ENCODE measurements at regions of chr5 and their contacts with region 1.

Region 1: DNA sequence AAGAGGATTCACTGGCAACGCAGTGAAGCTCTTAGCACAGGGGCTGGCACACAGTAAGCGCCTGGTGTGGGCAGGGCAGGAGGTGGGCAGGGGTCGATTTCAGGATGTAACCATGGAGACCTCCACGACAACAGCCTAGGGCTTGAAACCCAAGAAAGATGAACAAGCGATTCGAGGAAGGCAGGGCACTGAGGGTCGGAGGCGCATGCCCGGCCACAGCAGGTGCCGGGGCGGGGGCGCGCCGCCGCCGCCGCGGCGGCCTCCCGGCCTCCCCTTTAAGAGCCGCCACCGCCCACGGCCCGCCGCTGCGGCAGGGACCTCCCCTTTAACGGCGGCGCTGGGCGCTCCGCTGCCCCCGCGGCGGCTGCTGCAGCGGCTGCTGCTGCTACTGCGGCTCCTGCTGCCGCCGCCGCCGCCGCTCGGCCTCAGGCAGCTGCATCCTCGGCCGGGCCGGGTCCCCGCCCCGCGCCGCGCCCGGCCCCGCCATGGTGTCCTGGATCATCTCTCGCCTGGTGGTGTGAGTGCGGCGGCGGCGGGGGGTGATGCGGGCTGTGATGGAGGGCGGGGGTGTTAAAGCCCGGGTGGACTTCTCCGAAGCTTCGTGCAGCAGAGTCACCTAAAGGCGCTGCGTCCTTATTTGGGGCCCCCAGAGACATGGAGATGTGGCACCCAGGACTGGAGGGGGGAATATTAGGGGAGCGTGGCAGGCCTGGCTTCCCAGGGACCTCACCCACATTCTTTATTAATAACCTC is at the start of gene REEP2:
- DNase-seq: peak; percentile 90
- CTCF ChIP-seq: no peak

Region 2: GRCh38 chr5:138035605-138036537 is 403.0 kb before region 1 on chr5:
- CTCF ChIA-PET with region 1: no interaction called
- POLR2A ChIA-PET with region 1: no interaction called
- DNase-seq: peak; percentile 56
- CTCF ChIP-seq: peak; percentile 93

Region 3: GRCh38 chr5:138425079-138425478 is 13.8 kb before region 1 on chr5:
- CTCF ChIA-PET with region 1: interaction called, 10 read pairs
- POLR2A ChIA-PET with region 1: no interaction called
- DNase-seq: no peak
- CTCF ChIP-seq: no peak

Measured in GM10248 (cell line).